Activated B cell treated with CpG ODN at 0.5 μM for 24 hours (primary cell): ENCODE measurements at regions of chr4 and their contacts with region 1.

Region 1: GRCh38 chr4:2832349-2833239 is 11.1 kb upstream of the ADD1 start:
- DNase-seq: peak; percentile 65
- ATAC-seq: peak; percentile 85
- H3K4me3 Mint-ChIP-seq: peak overlapping the region; percentile 67
- H3K27ac Mint-ChIP-seq: peak overlapping the region; percentile 83
- H3K4me1 Mint-ChIP-seq: peaks cover 60% of the 10 kb centered on the region
- H3K27me3 Mint-ChIP-seq: no peaks in the 10 kb centered on the region
- CTCF ChIP-seq: no peak

Region 2: GRCh38 chr4:2817701-2818350 is 14.8 kb before region 1 on chr4:
- CTCF ChIA-PET with region 1: no interaction called
- POLR2A ChIA-PET with region 1: interaction called, 15 read pairs
- intact Hi-C with region 1: loop called (anchors 1 kb)
- DNase-seq: no peak
- ATAC-seq: peak; percentile 46
- H3K4me3 Mint-ChIP-seq: peak overlapping the region; percentile 73
- H3K27ac Mint-ChIP-seq: no peak overlapping the region
- H3K4me1 Mint-ChIP-seq: peaks cover 62% of the 10 kb centered on the region
- H3K27me3 Mint-ChIP-seq: no peaks in the 10 kb centered on the region
- CTCF ChIP-seq: no peak

Region 3: DNA sequence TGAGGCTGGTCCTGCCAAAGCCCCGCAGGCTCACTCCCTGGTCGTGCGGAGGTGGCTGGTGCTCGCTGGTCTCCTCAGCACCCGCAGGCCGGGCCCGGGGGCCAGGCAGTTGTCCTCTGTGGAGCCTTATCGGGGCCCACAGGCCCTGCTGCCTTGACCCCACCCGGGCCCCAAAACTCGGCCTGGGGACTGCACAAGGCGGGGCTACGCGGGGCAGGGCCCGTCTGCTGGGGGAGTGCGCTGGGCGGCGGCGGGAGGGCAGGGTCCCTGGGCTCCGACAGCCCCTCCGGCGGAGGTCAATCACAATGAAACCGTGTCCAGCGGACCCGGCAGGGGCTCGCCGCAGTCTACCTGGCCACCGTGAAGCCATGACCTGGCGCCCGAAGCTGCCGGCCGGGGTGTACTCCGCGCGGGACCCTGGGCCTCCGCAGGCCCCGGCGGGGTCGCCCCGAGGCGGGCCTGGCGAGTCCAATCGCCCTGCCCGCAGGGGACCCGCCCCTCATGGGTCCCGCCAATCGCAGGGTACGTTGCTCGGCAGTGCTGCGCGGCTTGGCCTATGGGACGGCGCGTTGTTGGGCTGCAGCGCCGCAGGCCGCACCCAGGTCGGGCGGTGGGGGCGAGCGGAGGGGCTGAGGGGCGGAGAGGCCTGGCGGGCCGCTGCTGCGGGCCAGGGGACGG is 10.8 kb after region 1 on chr4 and contains the start of gene ADD1:
- CTCF ChIA-PET with region 1: interaction called, 3 read pairs
- POLR2A ChIA-PET with region 1: interaction called, 29 read pairs
- intact Hi-C with region 1: loop called (anchors 1 kb)
- DNase-seq: peak; percentile 100
- ATAC-seq: peak; percentile 87
- H3K4me3 Mint-ChIP-seq: peak within 1 kb of the TSS; percentile 96
- H3K27ac Mint-ChIP-seq: peak within 1 kb of the TSS; percentile 94
- H3K4me1 Mint-ChIP-seq: peaks cover 61% of the 10 kb centered on the region
- H3K27me3 Mint-ChIP-seq: no peaks in the 10 kb centered on the region
- CTCF ChIP-seq: no peak
- total RNA-seq, gene ADD1: 326 and 340 TPM in 2 replicates